ENCODE measurements at regions of chr1 and their contacts with region 1.

Region 1: DNA sequence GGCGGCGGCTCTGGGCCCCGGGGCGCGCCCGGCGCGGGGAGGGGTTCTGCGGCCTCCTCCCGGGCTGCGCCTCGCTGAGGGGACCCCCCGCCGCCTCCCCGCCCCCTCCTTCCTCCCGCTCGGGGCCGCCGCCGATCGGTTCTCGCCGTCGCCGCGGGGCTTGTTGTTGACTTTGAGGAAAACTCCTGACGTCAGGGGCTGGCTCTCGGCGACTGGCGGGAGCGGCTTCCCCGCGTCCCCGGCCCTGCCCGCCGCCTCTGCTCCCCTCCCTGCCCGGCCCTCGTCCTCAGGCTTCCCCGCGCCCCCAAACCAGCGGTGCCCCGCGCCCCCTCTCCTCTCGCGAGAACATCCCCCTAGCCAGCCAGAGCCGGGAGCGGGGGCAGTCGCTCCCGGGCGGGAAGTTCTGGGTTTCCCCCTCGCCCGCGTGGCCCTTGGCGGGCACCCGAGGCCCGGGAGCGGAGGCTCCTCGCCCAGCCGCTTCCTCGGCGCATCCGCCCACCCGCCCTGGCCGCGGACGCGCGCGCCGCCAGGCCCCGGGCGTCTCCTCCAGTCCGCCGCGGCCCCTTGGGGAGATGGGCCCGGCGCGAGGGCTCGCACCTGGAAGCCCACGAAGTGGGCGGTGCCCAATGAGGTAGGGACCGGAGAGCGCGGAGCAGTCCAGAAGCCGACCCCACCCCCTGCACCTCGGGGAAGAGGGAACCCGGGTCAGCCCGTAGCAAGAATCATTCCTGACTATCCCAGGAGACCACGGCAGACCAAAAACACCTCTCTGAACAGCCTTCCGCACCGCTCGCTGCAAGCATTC is 611 bp upstream of the AKT3 start:
- DNase-seq: peak; percentile 86
- H3K4me3 Mint-ChIP-seq: peak overlapping the region; percentile 80
- H3K27ac Mint-ChIP-seq: peak overlapping the region; percentile 81
- H3K4me1 Mint-ChIP-seq: peaks cover 30% of the 10 kb centered on the region
- H3K27me3 Mint-ChIP-seq: peaks cover 7% of the 10 kb centered on the region

Region 2: GRCh38 chr1:243421784-243422183 is 428.9 kb before region 1 on chr1:
- CTCF ChIA-PET with region 1: no interaction called
- intact Hi-C with region 1: loop called (anchors 1 kb)
- DNase-seq: peak; percentile 77
- H3K4me3 Mint-ChIP-seq: peak overlapping the region; percentile 50
- H3K27ac Mint-ChIP-seq: no peak overlapping the region
- H3K4me1 Mint-ChIP-seq: peaks cover 25% of the 10 kb centered on the region
- H3K27me3 Mint-ChIP-seq: no peaks in the 10 kb centered on the region

Region 3: DNA sequence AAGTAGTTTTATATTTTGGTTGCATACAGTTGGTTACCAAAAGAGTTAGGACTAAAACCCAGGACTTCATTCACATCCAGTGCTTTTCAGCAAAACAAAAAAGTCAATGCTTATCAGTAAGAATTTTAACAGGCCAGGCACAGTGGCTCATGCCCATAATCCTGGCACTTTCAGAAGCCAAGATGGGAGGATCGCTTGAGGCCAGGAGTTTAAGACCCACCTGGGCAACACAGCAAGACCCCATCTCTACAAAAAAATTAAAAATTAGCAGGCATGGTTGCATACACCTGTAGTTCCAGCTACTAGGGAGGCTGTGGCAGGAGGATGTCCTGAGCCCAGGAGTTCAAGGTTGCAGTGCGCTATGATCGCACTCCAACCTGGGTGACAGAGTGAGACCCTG is 47.9 kb before region 1 on chr1:
- CTCF ChIA-PET with region 1: no interaction called
- intact Hi-C with region 1: loop called (anchors 2 kb)
- DNase-seq: no peak
- H3K4me3 Mint-ChIP-seq: no peak overlapping the region
- H3K27ac Mint-ChIP-seq: no peak overlapping the region
- H3K4me1 Mint-ChIP-seq: peaks cover 52% of the 10 kb centered on the region
- H3K27me3 Mint-ChIP-seq: no peaks in the 10 kb centered on the region

Region 4: DNA sequence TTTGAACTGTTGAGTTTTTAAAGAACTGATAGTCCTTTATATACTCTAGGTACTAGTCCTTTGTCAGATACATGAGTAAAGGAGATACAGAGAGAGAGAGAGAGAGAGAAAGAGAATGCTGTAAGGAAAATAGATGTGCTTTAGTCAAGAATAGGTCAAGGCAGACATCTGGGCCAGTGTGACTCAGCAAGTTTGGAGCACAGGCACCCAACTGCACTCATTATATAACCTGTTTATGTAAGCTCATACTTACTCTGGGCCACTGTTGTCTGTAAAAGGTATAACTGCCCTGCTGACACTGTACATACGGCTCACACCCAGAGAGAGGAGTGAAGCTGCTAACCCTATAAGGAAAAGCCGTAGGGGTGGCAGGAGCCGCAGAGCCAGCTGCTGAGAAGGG is 31.6 kb after region 1 on chr1:
- CTCF ChIA-PET with region 1: no interaction called
- intact Hi-C with region 1: no loop called
- DNase-seq: no peak
- H3K4me3 Mint-ChIP-seq: no peak overlapping the region
- H3K27ac Mint-ChIP-seq: no peak overlapping the region
- H3K4me1 Mint-ChIP-seq: no peaks in the 10 kb centered on the region
- H3K27me3 Mint-ChIP-seq: peaks cover 3% of the 10 kb centered on the region

Region 5: DNA sequence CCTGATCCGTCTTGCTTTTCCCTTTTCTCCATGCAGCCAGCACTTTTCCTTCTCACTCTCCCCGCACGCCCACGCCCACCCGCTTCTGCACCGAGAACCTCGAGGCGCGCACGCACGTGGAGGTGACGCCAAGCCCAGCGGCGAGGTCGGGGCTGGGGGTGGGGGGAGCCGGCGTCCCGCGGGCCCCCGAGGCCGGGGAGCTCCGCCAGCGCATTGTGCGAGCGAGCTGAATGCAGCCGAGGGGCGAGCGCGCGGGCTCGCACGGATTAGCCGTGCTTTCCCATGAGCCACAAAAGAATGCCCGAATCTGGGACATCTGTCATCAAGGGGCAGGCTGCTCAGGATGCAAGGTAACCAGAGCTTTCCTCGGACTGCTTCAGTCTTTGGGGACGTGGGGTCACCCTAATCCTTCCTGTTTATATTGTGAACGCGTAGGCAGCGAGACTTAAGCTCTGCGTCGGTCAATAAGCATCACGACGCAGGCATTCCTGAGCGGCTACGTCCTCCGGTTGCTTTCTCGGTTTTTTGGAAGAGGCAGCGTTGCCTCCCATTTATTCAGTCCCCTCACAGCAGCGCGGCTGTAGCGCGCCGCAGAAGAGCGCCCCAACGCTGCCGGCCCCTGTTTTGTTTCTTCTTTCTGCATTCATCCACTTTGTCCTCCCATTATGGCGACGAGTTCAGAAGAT is 66.7 kb after region 1 on chr1:
- CTCF ChIA-PET with region 1: no interaction called
- intact Hi-C with region 1: loop called (anchors 2 kb)
- DNase-seq: peak; percentile 26
- H3K4me3 Mint-ChIP-seq: peak overlapping the region; percentile 81
- H3K27ac Mint-ChIP-seq: no peak overlapping the region
- H3K4me1 Mint-ChIP-seq: peaks cover 16% of the 10 kb centered on the region
- H3K27me3 Mint-ChIP-seq: peaks cover 37% of the 10 kb centered on the region

Measured in activated naive CD4-positive, alpha-beta T cell treated with anti-CD3 and anti-CD28 coated beads for 36 hours (primary cell).